ENCODE measurements at regions of chrX and their contacts with region 1.

Region 1: GRCh38 chrX:134484039-134484438 is 24.1 kb downstream of the HPRT1 start:
- DNase-seq: no peak
- ATAC-seq: no peak
- H3K4me3 Mint-ChIP-seq: no peak overlapping the region
- H3K27ac Mint-ChIP-seq: no peak overlapping the region
- H3K4me1 Mint-ChIP-seq: no peaks in the 10 kb centered on the region
- H3K27me3 Mint-ChIP-seq: no peaks in the 10 kb centered on the region
- CTCF ChIP-seq: peak; percentile 24

Region 2: DNA sequence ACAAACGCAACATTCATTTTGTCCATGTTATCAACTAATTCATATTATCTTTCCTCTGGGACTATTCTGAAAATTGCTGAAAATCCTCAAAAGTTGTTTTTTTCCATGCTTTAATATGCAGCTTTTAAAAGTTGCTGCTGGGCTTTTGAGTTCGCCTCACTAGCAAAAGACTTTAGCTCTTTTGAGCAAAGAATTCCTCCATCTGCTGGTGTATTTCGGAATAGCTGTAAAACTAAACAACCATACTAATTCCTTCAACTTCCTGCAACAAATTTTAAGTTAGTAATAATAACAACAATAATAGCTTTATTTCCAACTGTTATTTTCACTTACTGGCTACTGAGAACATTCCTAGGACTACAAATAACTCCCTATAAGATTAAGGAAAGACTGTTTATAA is 298.8 kb after region 1 on chrX:
- CTCF ChIA-PET with region 1: no interaction called
- POLR2A ChIA-PET with region 1: no interaction called
- intact Hi-C with region 1: loop called (anchors 5 kb)
- DNase-seq: no peak
- ATAC-seq: no peak
- H3K4me3 Mint-ChIP-seq: no peak overlapping the region
- H3K27ac Mint-ChIP-seq: no peak overlapping the region
- H3K4me1 Mint-ChIP-seq: no peaks in the 10 kb centered on the region
- H3K27me3 Mint-ChIP-seq: no peaks in the 10 kb centered on the region
- CTCF ChIP-seq: no peak

Region 3: GRCh38 chrX:134990801-134991481 is 506.9 kb after region 1 on chrX and contains the start of gene SMIM10:
- CTCF ChIA-PET with region 1: no interaction called
- POLR2A ChIA-PET with region 1: no interaction called
- intact Hi-C with region 1: loop called (anchors 10 kb)
- DNase-seq: peak; percentile 26
- ATAC-seq: peak; percentile 65
- H3K4me3 Mint-ChIP-seq: peak within 1 kb of the TSS; percentile 83
- H3K27ac Mint-ChIP-seq: peak within 1 kb of the TSS; percentile 79
- H3K4me1 Mint-ChIP-seq: peaks cover 15% of the 10 kb centered on the region
- H3K27me3 Mint-ChIP-seq: peaks cover 13% of the 10 kb centered on the region
- CTCF ChIP-seq: no peak
- total RNA-seq, gene SMIM10: 1.3 and 1.4 TPM in 2 replicates